ENCODE measurements at regions of chr20 and their contacts with region 1.

Region 1: DNA sequence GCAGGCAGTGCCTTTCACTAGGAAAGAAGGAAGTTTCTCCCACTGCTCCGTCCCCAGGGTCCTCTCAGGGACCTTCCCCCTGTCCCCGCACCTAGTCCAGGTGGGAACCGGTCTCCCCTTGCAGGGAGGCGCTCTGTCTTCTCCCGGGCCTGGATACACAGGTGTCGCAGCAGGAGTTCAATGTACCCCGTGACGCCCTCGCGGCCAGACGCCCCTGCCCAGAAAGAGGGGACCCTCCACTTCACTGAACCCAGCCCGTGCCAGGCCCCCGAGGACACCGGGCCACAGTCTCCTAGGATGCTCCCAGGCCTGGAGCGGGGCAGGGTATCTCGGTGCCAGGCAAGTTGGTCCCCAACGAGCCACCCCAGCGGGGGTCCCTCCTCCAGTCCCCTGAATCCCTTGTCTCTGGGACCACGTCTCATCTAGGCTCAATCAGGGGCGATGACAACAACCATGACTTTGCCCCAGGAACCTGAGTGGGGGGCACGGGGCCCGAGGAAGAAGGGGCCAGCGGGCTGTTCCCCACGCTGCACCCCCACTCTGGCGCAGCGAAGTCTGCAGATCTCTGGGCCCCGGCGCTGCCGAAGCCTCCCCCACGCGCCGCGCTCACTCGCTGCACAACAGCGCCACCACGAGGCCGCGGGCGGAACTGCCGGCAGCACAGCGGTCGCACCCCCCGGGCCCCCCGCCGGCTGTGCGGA is 103.0 kb downstream of the EDN3 start:
- DNase-seq: peak; percentile 63
- ATAC-seq: peak; percentile 73

Region 2: GRCh38 chr20:58870239-58871014 is 533.0 kb before region 1 on chr20:
- intact Hi-C with region 1: loop called (anchors 5 kb)
- DNase-seq: peak; percentile 71
- ATAC-seq: peak; percentile 88

Region 3: GRCh38 chr20:59512651-59513050 is 109.2 kb after region 1 on chr20:
- intact Hi-C with region 1: no loop called
- DNase-seq: no peak
- ATAC-seq: no peak